ENCODE measurements at regions of chr5 and their contacts with region 1.

Region 1: DNA sequence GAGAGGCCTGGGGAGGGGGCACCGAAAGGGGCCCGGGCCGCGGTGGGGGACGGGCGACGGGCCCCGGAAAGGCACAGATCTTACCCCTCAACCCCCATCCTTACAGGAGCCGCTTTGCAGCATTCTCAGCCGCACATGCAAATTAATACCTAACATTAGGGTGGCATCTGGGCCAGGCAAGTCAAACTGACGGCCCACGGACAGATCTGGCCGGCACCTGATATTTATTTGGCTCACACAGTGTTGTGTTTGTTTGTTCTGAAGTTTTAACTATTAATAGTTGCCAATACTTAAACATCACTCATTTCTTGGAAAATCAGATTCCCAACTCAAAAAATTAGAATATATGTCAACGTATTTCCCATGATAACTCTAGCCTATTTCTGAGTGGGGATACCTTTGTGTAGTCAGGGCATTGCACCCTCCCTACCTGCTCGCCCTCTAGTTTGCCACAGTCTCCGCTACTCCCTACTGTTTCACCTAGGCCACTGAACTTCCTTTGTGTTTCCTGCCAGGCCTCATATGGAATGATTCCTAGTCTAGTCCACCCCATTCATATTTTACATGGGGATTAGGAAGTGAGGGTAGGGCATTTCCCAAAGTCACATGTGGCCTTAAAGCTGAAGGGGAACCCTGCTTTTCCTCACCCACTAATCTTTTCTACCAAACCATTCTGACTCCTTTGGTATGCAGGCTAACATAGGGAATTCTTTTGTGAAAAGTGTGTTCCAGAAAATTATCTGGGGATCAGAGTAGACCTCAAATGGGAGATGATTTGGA is 71.9 kb upstream of the LARP1 start:
- DNase-seq: no peak
- H3K4me3 ChIP-seq: peak overlapping the region; percentile 40 to 44
- H3K27ac ChIP-seq: peak overlapping the region; percentile 73 to 83
- H3K4me1 ChIP-seq: no peaks in the 10 kb centered on the region
- H3K27me3 ChIP-seq: no peaks in the 10 kb centered on the region
- CTCF ChIP-seq: no peak
- POLR2A ChIP-seq: no peak

Region 2: DNA sequence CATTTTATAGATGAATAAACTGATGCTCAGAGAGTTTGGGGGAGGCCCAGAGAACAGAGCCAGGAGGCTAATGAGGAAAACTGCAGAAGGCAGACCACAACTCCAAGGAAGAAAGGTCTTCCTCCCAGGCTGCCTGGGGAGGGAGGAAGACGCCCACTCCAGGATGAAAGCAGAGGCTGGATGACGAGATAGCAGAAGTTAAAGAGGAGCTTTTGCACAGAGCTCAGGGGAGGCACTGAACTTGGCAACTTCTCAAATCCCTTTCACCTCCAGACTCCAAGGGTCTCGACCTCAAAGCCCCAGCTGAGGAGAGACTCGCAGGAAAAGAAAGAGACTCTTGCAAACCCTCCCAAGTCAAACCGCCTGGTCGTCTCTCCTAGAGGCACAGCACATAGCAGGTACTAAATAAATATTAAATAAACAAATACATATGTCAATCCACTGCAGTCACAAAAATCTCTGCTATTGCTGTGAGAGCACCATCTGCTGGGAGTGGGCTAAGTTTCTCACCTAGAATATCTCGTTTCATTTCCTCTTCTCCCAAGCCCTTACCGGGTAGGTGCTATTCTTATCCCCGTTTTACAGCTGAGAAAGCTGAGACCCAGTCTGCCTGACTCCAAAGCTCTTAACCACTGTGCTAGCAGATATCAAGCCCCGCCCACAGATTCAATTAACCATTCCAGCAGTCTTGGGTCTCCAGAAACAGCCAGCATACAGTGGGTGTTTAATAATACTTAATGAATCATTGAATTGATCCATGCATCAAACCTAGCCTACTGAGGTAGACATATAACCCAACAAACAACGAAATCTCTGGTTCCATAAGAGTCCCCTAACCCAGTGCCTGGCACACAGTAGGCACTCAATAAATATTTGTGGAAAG is 107.5 kb before region 1 on chr5:
- intact Hi-C with region 1: no loop called
- DNase-seq: no peak
- H3K4me3 ChIP-seq: no peak overlapping the region
- H3K27ac ChIP-seq: no peak overlapping the region
- H3K4me1 ChIP-seq: no peaks in the 10 kb centered on the region
- H3K27me3 ChIP-seq: peaks cover 4% of the 10 kb centered on the region
- CTCF ChIP-seq: no peak
- POLR2A ChIP-seq: no peak

Region 3: DNA sequence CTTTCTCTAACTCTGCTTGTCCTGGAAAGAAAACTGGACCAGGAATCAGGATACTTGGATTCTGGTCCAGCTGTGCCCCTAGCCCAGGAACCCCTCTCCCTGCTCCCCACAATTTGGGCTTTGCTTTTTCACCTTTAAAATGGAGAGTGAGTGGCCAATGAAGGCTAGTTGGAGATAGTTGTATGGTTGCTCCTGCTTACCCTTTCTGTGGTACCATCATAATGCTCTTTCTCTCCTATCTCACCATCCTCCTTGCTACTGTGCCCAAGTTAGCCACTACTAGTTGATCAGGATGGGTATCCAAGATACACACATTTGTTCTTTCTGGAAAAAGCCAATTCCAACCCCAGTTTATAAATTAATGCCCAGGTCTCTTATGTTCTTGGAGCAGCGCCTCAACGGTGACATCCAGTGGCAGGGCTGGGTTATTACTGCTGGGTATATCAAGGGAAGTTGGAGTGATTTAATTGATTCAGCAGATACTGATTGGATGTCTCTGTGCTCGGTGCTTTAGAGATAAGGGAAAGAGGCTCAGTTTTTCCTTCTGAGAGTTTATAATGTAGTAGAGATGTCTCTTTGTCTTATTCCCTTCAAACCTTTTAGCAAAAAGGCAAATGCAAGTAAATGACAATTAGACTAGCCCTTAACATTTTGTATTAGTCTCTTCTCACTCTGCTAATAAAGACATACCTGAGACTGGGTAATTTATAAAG is 128.5 kb after region 1 on chr5:
- intact Hi-C with region 1: loop called (anchors 10 kb)
- DNase-seq: peak; percentile 32
- H3K4me3 ChIP-seq: no peak overlapping the region
- H3K27ac ChIP-seq: no peak overlapping the region
- H3K4me1 ChIP-seq: no peaks in the 10 kb centered on the region
- H3K27me3 ChIP-seq: no peaks in the 10 kb centered on the region
- CTCF ChIP-seq: peak; percentile 40 to 90 (median 70)
- POLR2A ChIP-seq: no peak

Region 4: GRCh38 chr5:154857530-154858296 is 174.4 kb after region 1 on chr5:
- intact Hi-C with region 1: loop called (anchors 10 kb)
- DNase-seq: peak; percentile 92
- H3K4me3 ChIP-seq: peak overlapping the region; percentile 75 to 82
- H3K27ac ChIP-seq: peak overlapping the region; percentile 97 to 98
- H3K4me1 ChIP-seq: peaks cover 6% of the 10 kb centered on the region
- H3K27me3 ChIP-seq: no peaks in the 10 kb centered on the region
- CTCF ChIP-seq: peak in 2 of 4 experiments; percentile 19 to 28
- POLR2A ChIP-seq: peak; percentile 69

Region 5: DNA sequence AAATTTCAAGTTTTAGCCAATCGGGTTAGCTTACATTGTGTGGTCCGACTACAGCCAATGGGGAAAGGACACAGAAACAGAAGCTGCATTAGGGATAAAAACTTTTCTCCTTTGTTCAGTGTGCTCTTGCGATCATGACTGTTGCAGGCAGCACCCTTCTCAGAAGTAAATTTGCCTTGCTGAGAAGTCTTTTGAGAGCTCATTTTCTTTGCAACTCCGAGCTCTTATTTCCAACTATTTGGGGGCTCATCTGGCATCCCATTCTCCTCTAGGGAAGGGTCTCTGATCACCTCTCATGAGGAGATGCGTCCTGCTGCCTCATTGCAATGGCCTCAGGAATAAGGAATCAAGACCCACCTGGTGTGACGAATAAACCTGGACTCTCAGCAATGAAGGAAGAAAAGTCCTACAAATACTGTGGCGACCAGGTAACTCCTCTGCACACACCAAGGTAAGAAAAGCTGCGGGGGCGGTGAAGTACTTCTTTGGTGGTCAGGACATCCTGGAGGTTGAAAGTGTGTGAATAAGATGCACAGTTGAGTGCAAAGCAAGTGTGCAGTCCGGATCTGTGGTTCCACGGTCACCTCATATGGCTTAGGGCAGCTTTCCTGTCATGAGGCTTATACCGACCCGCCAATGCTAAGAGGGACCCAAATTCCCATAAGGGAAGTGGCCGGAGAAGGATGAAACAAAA is 195.5 kb after region 1 on chr5:
- intact Hi-C with region 1: no loop called
- DNase-seq: no peak
- H3K4me3 ChIP-seq: no peak overlapping the region
- H3K27ac ChIP-seq: no peak overlapping the region
- H3K4me1 ChIP-seq: no peaks in the 10 kb centered on the region
- H3K27me3 ChIP-seq: no peaks in the 10 kb centered on the region
- CTCF ChIP-seq: no peak
- POLR2A ChIP-seq: no peak

Measured in prostate gland (tissue), 2 donors.